Calu3 (cell line): ENCODE measurements at regions of chr22 and their contacts with region 1.

Region 1: DNA sequence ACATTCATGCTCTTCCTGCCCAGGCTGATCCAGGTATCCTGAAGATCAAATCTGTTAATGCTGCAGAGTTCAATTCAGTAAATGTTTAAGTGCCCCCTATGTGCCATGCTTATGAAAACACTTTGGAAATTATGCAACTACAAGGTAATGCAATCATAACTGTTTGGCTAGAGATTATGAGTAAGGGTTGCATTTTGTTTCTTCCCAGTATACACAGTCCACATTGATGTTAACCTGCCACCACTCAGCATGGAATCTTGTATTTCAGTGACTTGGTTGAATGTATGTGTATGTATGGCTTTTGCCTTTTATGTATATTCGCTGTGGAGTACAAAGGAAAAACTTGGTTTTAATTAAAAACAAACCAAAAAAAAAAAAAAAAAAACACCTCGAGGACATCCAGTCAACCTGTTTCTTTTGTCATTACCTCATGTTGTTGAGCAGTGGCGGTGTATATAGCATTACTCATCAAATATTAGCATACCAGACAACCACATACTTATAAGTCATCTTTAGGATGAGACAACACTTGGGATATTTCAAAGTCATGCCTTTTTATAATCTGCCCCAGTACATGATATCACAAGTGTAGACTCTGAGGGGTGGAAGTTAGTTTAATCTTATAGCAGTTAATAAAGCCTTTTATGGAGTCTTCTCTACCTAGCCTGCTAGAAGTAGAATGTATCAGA is 86.1 kb upstream of the HORMAD2 start:
- DNase-seq: no peak
- H3K4me3 Mint-ChIP-seq: peak overlapping the region; percentile 11
- H3K27ac Mint-ChIP-seq: peak overlapping the region; percentile 80
- H3K4me1 Mint-ChIP-seq: peaks cover 27% of the 10 kb centered on the region
- H3K27me3 Mint-ChIP-seq: no peaks in the 10 kb centered on the region
- CTCF ChIP-seq: no peak

Region 2: GRCh38 chr22:29772170-29772641 is 222.0 kb before region 1 on chr22:
- CTCF ChIA-PET with region 1: no interaction called
- intact Hi-C with region 1: loop called (anchors 5 kb)
- DNase-seq: no peak
- H3K4me3 Mint-ChIP-seq: no peak overlapping the region
- H3K27ac Mint-ChIP-seq: peak overlapping the region; percentile 78
- H3K4me1 Mint-ChIP-seq: peaks cover 33% of the 10 kb centered on the region
- H3K27me3 Mint-ChIP-seq: no peaks in the 10 kb centered on the region
- CTCF ChIP-seq: no peak

Region 3: GRCh38 chr22:29820961-29821789 is 173.0 kb before region 1 on chr22:
- CTCF ChIA-PET with region 1: no interaction called
- intact Hi-C with region 1: loop called (anchors 2 kb)
- DNase-seq: peak; percentile 97
- H3K4me3 Mint-ChIP-seq: no peak overlapping the region
- H3K27ac Mint-ChIP-seq: peak overlapping the region; percentile 78
- H3K4me1 Mint-ChIP-seq: peaks cover 17% of the 10 kb centered on the region
- H3K27me3 Mint-ChIP-seq: no peaks in the 10 kb centered on the region
- CTCF ChIP-seq: no peak

Region 4: DNA sequence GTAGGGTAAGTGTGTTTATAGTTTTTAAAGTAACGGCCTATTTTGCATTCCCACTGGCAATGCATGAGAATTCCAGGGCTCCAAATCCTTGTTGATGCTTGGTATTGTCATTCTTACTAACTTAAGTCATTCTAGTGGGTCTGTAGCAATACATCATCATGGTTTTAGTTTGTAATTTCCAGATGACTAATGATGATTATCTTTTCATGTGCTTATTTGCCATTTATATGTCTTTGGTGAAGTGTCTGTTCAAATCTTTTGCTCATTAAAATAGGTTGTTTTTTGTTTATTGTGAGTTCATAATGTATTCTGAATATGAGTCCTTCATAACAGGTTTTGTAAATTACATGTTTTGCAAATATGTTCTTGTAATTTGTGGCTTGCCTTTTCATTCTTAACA is 80.0 kb before region 1 on chr22:
- CTCF ChIA-PET with region 1: no interaction called
- intact Hi-C with region 1: no loop called
- DNase-seq: no peak
- H3K4me3 Mint-ChIP-seq: no peak overlapping the region
- H3K27ac Mint-ChIP-seq: no peak overlapping the region
- H3K4me1 Mint-ChIP-seq: peaks cover 64% of the 10 kb centered on the region
- H3K27me3 Mint-ChIP-seq: no peaks in the 10 kb centered on the region
- CTCF ChIP-seq: no peak